Adrenal gland (tissue), 19 donors: ENCODE measurements at regions of chr20 and their contacts with region 1.

Region 1: GRCh38 chr20:472889-473292 is 10.6 kb upstream of the TBC1D20 start:
- DNase-seq: no peak
- H3K4me3 ChIP-seq: no peak overlapping the region
- H3K27ac ChIP-seq: no peak overlapping the region
- H3K4me1 ChIP-seq: no peaks in the 10 kb centered on the region
- H3K27me3 ChIP-seq: no peaks in the 10 kb centered on the region
- CTCF ChIP-seq: no peak
- POLR2A ChIP-seq: no peak

Region 2: GRCh38 chr20:354298-355064 is 118.4 kb before region 1 on chr20:
- intact Hi-C with region 1: loop called in 1 of 2 experiments (anchors 5 kb)
- DNase-seq: peak; percentile 65 to 84 (median 72)
- H3K4me3 ChIP-seq: no peak overlapping the region
- H3K27ac ChIP-seq: no peak overlapping the region
- H3K4me1 ChIP-seq: peaks cover 0 to 11% of the 10 kb centered on the region in 2 donors
- H3K27me3 ChIP-seq: no peaks in the 10 kb centered on the region
- CTCF ChIP-seq: peak; percentile 89 to 96 (median 94)
- POLR2A ChIP-seq: no peak

Region 3: GRCh38 chr20:362271-363254 is 110.3 kb before region 1 on chr20:
- intact Hi-C with region 1: loop called in 1 of 2 experiments (anchors 5 kb)
- DNase-seq: peak; percentile 90 to 98 (median 97)
- H3K4me3 ChIP-seq: no peak overlapping the region
- H3K27ac ChIP-seq: no peak overlapping the region
- H3K4me1 ChIP-seq: peaks cover 0 to 6% of the 10 kb centered on the region in 2 donors
- H3K27me3 ChIP-seq: no peaks in the 10 kb centered on the region
- CTCF ChIP-seq: peak; percentile 30 to 88 (median 72)
- POLR2A ChIP-seq: no peak

Region 4: DNA sequence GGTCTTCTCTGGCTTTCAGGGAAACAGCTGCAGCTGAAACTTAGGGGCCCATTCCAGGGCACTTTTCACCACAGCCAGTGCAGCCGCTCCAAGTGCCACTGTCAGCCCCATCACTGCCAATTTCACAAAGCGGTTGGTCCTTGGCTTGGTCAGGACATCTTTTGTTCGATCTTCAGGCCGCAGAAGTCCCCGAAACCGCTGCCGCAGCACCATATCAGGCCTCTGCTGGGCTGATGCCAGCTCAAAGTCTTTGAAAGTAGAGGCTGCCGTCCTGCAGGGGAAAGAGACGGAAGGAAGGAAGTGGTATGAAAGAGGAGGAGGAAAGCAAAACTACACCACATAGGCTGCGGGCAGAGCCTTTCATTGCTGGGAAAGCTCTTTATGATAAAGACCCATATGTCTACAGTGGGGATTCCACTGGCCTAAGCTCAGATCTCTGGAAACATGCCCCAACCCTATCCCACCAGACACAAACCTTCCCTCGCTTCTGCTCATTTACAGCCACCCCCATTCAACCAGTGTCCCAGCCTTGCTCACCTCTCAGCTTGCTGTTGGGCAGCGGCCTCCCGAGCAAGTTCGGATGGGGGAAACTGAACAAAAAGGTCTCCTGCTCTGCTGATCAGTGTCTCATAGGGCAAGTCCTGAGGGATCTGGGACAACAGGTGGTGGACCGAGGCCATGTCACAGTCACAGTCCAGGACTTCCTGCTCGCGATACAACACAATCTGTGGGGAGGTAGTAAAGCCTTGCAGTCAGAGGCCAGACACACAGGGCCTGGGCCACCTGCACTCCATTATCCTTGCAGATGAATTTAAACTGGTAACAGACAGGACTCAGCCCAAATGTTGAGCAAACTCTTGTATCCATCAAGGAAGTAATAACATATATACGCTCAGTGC is 34.1 kb before region 1 on chr20:
- intact Hi-C with region 1: loop called (anchors 5 kb)
- DNase-seq: peak in 2 of 7 donors; percentile 15 to 25
- H3K4me3 ChIP-seq: no peak overlapping the region
- H3K27ac ChIP-seq: peak overlapping the region in 1 of 5 donors; percentile 10
- H3K4me1 ChIP-seq: peaks cover 1 to 21% of the 10 kb centered on the region in 2 donors
- H3K27me3 ChIP-seq: no peaks in the 10 kb centered on the region
- CTCF ChIP-seq: no peak
- POLR2A ChIP-seq: no peak

Region 5: DNA sequence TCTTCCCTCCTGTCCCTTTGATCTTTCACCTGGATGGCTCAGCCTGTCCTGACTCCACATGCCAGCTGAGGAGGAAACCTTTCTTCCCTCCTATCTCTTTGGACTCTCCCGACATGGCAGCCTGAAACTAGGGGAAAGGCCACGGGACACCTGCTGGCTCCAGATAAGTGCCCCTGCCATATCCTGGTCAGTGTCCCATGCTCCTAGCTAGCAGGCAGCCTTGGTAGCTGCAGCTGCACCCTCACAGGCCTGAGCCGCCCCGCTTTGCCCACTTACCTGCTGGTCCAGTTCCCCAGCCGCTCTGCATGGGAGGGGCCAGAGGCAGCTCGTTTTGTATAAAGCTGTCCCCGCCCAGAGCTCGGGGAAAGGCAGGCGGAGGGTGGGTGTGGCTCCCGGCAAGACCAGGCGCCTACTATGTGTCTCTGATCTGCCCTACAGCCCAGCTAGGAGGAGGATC is 302.8 kb after region 1 on chr20:
- intact Hi-C with region 1: no loop called
- DNase-seq: no peak
- H3K4me3 ChIP-seq: no peak overlapping the region
- H3K27ac ChIP-seq: no peak overlapping the region
- H3K4me1 ChIP-seq: no peaks in the 10 kb centered on the region
- H3K27me3 ChIP-seq: peaks cover 3% of the 10 kb centered on the region
- CTCF ChIP-seq: no peak
- POLR2A ChIP-seq: no peak